Activated CD4-positive, alpha-beta T cell treated with anti-CD3 and anti-CD28 coated beads, Interleukin-2, amount 10 ng/mL, durations not matched to agents 24 days and 14 days (primary cell): ENCODE measurements at regions of chr3 and their contacts with region 1.

Region 1: DNA sequence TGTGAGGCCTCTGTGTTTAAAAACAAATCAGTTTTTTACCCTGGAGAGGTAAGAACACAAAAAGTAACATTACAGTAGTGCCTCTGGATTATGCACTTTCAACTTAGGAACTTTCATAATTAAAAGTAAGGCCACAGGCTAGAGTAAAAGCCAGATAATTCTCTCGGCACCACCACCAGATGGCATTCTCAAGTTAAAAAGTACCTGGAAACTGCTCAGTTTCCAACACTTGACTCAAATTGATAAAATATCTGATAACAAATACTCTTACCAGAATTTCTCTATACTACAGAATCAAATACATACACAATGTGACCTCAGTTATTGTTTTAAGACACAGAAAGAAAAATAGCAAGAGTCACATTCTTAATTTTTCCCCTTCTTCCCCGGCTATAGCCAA is 19.9 kb downstream of the SPICE1 start:
- DNase-seq: peak; percentile 82
- H3K4me3 Mint-ChIP-seq: no peak overlapping the region
- H3K27ac Mint-ChIP-seq: no peak overlapping the region
- H3K4me1 Mint-ChIP-seq: no peaks in the 10 kb centered on the region
- H3K27me3 Mint-ChIP-seq: no peaks in the 10 kb centered on the region

Region 2: GRCh38 chr3:113231827-113232253 is 263.2 kb before region 1 on chr3:
- intact Hi-C with region 1: no loop called
- DNase-seq: no peak
- H3K4me3 Mint-ChIP-seq: no peak overlapping the region
- H3K27ac Mint-ChIP-seq: no peak overlapping the region
- H3K4me1 Mint-ChIP-seq: peaks cover 2% of the 10 kb centered on the region
- H3K27me3 Mint-ChIP-seq: peaks cover 7% of the 10 kb centered on the region

Region 3: GRCh38 chr3:113514265-113514769 is 19.3 kb after region 1 on chr3:
- intact Hi-C with region 1: loop called (anchors 1 kb)
- DNase-seq: no peak
- H3K4me3 Mint-ChIP-seq: no peak overlapping the region
- H3K27ac Mint-ChIP-seq: no peak overlapping the region
- H3K4me1 Mint-ChIP-seq: peaks cover 13% of the 10 kb centered on the region
- H3K27me3 Mint-ChIP-seq: peaks cover 26% of the 10 kb centered on the region

Region 4: GRCh38 chr3:113531826-113532697 is 37.0 kb after region 1 on chr3 and contains the start of gene SIDT1:
- intact Hi-C with region 1: loop called (anchors 1 kb)
- DNase-seq: peak; percentile 92
- H3K4me3 Mint-ChIP-seq: peak within 1 kb of the TSS; percentile 91
- H3K27ac Mint-ChIP-seq: peak within 1 kb of the TSS; percentile 96
- H3K4me1 Mint-ChIP-seq: peaks cover 36% of the 10 kb centered on the region
- H3K27me3 Mint-ChIP-seq: peaks cover 11% of the 10 kb centered on the region
- total RNA-seq, gene SIDT1: 8.5 and 11.5 TPM in 2 replicates

Region 5: GRCh38 chr3:113552851-113553250 is 57.8 kb after region 1 on chr3:
- intact Hi-C with region 1: loop called (anchors 2 kb)
- DNase-seq: peak; percentile 66
- H3K4me3 Mint-ChIP-seq: no peak overlapping the region
- H3K27ac Mint-ChIP-seq: no peak overlapping the region
- H3K4me1 Mint-ChIP-seq: peaks cover 2% of the 10 kb centered on the region
- H3K27me3 Mint-ChIP-seq: no peaks in the 10 kb centered on the region

Region 6: DNA sequence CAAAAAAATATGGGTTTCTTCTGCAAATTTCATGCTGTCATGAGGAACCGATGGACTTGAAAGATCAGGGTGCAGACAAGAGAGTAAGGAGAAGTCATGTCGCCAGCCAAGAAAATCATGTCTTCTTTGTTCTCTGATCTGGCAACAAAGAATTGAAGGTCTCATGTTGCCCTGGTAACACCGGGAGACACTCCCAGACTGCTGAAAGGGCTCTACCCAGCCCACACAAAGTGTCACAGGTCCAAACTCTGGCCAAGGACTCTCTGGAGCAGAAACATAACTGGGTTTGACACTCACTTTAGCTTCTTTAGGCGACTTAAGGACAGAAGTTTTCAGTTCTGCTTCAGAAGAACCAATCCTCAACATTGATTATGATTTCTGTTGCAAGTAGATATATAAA is 80.2 kb after region 1 on chr3:
- intact Hi-C with region 1: loop called (anchors 1 kb)
- DNase-seq: no peak
- H3K4me3 Mint-ChIP-seq: no peak overlapping the region
- H3K27ac Mint-ChIP-seq: no peak overlapping the region
- H3K4me1 Mint-ChIP-seq: peaks cover 5% of the 10 kb centered on the region
- H3K27me3 Mint-ChIP-seq: no peaks in the 10 kb centered on the region

Region 7: DNA sequence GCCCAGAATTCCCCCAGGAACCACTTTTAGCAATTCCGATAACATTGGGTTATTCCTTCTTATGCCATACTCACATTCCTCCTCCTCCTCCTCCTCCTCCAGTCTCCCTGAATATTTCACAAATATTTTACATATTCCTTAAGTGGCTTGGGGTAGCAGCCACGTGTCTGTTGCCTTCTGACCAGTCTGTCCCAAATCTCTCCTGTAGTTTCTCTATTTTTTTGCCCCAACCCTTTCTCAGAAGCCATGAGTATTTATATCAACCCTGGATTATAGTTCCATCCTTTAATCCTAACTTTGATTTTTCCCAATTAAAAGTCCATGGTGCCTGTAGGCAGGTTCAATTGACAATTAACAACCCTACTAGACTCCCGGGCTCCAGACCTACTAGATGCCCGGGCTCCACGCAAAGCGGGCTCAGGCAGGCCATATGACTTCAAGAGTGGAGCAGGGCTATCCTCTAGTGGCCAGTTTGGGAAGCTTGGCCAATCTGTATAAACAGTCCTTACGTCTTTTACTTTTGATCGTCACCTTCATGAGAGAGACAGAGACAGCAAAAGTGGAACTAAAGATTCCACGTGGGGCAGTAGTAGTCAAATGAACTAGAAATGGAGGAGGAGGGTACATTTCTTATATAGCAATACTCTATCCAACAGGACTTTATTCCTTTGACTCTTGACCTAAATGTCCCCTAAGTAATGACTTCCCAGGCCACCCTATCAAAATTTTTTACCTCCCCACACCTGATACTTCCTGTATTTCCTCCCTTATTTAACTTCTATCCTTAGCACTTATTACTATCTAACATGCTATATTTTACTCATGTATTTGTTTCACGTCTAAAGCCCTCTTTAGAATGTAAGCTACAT is 131.7 kb after region 1 on chr3:
- intact Hi-C with region 1: loop called (anchors 2 kb)
- DNase-seq: peak; percentile 64
- H3K4me3 Mint-ChIP-seq: no peak overlapping the region
- H3K27ac Mint-ChIP-seq: no peak overlapping the region
- H3K4me1 Mint-ChIP-seq: peaks cover 8% of the 10 kb centered on the region
- H3K27me3 Mint-ChIP-seq: no peaks in the 10 kb centered on the region